ENCODE measurements at regions of chr17 and their contacts with region 1.

Region 1: DNA sequence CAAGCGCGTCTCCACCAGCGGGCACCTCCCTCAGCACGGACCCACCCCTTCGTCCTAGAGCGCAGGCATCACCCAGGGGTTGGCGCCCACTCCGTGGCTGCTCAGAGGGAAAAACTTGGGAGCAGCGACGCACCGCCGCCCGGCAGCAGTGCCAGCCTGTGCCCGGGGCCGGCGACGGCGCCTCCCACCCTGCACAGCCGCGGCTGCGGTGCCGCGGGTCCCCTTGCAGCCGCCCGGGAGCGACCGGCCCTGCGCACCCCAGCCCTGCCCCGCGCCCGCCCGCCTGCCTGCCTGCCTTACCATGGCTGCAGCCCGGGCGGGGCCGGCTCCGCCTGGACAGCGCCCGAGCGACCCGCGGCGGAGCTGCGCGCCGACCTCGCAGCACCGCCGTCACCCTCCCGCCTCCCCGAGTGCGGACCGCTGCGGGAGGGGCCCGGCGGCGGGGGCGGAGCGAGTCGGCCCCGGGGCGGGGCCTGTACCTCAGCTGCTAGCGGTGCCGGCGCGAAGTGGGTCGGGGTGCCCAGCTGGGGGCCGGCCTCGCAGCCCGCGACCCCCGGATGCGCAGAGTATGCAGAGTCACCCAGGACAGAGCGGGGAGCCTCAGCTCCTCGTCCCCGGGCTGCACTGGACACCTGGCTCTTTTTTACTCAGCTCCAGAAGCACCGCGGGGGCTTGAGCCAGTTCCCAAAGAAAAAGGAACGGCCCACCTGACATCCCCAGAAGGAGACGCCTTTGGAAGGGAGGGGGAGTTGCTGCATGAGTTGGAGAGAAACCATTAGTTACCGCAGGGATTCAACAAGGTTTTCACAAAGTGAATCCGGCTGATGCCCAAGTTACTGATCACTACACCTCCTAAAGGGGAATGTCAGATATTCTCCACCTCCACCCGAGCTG is 17.5 kb upstream of the MTMR4 start:
- DNase-seq: no peak
- H3K4me3 ChIP-seq: peak overlapping the region; percentile 53 to 59
- H3K27ac ChIP-seq: peak overlapping the region; percentile 65
- H3K4me1 ChIP-seq: peaks cover 7% of the 10 kb centered on the region
- H3K27me3 ChIP-seq: no peaks in the 10 kb centered on the region
- CTCF ChIP-seq: no peak
- POLR2A ChIP-seq: peak in 1 of 2 donors; percentile 43

Region 2: DNA sequence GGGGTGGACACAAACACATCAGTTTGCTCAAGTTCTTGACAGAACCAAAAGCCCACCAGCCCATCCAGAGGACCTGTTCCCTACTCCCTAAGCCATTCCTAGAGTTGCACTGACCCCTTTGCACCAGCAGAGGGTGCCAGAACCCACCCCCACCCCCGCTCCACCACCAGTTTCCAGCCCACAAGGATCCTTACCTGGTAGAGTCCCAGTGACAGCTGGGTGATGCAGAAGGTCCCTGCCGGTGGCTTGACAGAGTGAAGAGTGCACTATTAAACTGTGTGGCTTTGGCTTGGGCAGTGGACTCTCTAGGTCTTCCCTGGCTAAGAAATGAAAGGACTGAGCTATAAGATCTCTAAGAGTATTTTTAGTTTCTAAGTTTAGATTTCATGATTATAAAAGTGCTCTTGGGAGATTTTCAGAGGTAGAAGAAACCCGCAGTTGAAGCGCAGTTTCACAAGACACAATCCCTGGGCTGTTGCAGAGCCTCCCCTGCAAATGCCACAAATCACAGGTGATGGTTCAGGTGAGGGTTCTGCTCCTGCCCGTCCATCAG is 55.9 kb after region 1 on chr17:
- intact Hi-C with region 1: no loop called
- DNase-seq: no peak
- H3K4me3 ChIP-seq: no peak overlapping the region
- H3K27ac ChIP-seq: no peak overlapping the region
- H3K4me1 ChIP-seq: no peaks in the 10 kb centered on the region
- H3K27me3 ChIP-seq: no peaks in the 10 kb centered on the region
- CTCF ChIP-seq: peak; percentile 33 to 81 (median 79)
- POLR2A ChIP-seq: no peak

Region 3: DNA sequence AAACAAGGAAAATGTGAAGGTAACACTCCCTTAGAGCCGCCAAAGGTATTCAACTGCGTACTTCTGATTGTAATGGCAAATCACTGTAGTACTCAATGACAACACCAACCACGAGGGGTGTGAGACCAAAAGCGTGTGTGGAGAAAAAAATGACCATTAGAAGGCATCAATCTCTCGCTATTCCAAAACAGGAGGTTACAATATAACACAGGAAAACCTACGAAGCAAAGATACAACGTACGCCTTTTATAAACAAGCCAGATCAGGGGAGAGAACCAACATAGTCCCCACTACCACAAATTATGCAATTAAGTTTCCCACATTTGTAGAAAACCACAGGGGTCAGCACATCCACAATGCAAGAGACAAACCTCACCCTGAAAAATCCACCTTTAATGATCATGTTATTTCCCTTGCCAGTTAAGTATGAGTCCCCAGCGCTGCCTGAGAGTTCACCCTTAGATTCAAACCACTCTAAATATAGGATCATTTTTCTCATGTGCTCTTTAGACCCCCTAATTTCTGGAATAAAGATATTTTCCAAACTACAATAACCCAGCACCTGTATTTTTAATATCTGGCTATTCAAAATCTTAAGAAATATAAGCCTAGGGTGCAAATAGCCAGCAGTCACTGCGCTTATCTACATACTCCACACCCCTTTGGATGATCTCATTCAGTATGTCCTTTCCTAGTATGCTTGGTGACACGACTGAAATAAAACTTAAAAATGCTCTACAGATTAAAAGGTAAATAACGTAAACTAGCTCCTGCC is 147.5 kb after region 1 on chr17:
- intact Hi-C with region 1: loop called (anchors 10 kb)
- DNase-seq: no peak
- H3K4me3 ChIP-seq: no peak overlapping the region
- H3K27ac ChIP-seq: no peak overlapping the region
- H3K4me1 ChIP-seq: no peaks in the 10 kb centered on the region
- H3K27me3 ChIP-seq: no peaks in the 10 kb centered on the region
- CTCF ChIP-seq: no peak
- POLR2A ChIP-seq: no peak